ENCODE measurements at regions of chr5 and their contacts with region 1.

Region 1: GRCh38 chr5:142888469-142889085 is 118.4 kb downstream of the ARHGAP26 start:
- DNase-seq: peak; percentile 55
- H3K4me3 ChIP-seq: no peak overlapping the region
- H3K27ac ChIP-seq: no peak overlapping the region
- H3K4me1 ChIP-seq: peaks cover 3% of the 10 kb centered on the region
- H3K27me3 ChIP-seq: no peaks in the 10 kb centered on the region
- CTCF ChIP-seq: peak; percentile 50 to 60
- POLR2A ChIP-seq: no peak

Region 2: DNA sequence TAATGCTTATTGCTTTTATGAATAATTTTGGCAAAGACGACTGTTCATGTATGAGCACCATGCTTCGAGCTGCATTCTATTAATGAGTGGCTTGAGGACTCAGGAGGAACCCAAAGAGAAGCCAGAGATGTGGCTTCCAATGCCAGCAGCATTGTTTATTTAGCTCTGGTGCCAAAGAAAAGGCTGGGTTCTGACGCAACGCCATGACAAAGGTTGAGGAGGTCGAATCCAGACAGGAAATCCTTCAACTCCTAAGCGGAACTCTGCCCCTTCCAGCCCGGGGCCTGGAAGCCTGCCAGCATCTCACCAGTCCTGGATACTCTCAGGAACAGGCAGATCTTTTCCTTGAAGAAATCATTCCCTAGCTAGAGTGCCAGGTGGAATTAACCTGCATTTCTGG is 14.0 kb before region 1 on chr5:
- CTCF ChIA-PET with region 1: interaction called, 39 read pairs
- POLR2A ChIA-PET with region 1: no interaction called
- dilution Hi-C with region 1: no loop called
- intact Hi-C with region 1: no loop called
- DNase-seq: peak; percentile 96
- H3K4me3 ChIP-seq: no peak overlapping the region
- H3K27ac ChIP-seq: peak overlapping the region; percentile 42
- H3K4me1 ChIP-seq: peaks cover 40% of the 10 kb centered on the region
- H3K27me3 ChIP-seq: no peaks in the 10 kb centered on the region
- CTCF ChIP-seq: no peak
- POLR2A ChIP-seq: no peak

Region 3: DNA sequence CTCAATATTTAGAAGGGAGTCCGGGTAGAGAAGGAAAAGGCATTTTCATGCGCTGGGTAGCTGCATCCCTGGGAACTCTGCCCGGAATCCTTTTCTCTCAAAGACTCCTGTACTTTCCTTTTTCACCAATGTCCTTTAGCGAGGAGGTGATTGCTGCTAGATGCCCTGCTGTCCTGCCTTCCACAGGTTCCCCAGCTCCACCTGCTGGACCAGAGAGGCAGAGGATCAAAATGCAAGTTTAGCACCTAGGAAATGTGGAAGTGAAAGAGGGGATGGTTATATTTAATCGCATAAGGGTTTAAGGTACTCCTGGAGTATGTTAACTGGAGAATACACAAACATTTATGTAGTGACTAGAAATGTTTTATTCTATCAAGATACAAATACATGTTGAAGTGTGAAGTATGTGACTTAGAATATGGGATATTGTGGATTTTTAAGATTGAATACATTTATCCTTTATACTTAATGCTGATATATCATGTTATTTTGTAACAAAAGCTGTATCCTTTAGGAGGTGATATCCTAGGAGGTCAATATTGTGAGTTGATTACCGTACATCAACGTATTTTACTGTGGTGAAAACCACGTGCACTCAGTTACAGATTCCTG is 27.3 kb after region 1 on chr5:
- CTCF ChIA-PET with region 1: interaction called, 10 read pairs
- POLR2A ChIA-PET with region 1: no interaction called
- dilution Hi-C with region 1: no loop called
- intact Hi-C with region 1: no loop called
- DNase-seq: no peak
- H3K4me3 ChIP-seq: no peak overlapping the region
- H3K27ac ChIP-seq: no peak overlapping the region
- H3K4me1 ChIP-seq: no peaks in the 10 kb centered on the region
- H3K27me3 ChIP-seq: no peaks in the 10 kb centered on the region
- CTCF ChIP-seq: peak; percentile 31 to 41
- POLR2A ChIP-seq: no peak

Region 4: DNA sequence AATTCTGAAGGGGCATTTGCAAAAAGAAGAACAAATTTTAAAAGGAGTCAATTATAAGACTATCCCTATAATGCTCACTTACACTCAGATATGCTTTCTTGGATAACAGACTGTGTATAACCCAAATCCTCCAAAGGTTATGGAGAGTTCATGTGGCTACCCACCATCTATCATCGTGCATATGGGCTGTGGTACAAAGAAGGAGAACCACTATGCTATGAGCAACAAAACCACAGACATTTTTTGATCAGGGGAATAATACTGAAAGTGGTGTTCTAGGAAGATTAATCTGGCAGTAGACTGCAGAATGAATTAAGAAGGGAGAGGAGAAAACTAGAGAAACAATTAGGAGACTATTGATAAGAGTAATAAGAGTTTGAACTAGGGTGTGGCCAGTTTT is 498.1 kb after region 1 on chr5:
- CTCF ChIA-PET with region 1: no interaction called
- POLR2A ChIA-PET with region 1: no interaction called
- dilution Hi-C with region 1: no loop called
- intact Hi-C with region 1: no loop called
- DNase-seq: no peak
- H3K4me3 ChIP-seq: no peak overlapping the region
- H3K27ac ChIP-seq: no peak overlapping the region
- H3K4me1 ChIP-seq: no peaks in the 10 kb centered on the region
- H3K27me3 ChIP-seq: no peaks in the 10 kb centered on the region
- CTCF ChIP-seq: no peak
- POLR2A ChIP-seq: no peak

Measured in endothelial cell of umbilical vein (primary cell).